Activated naive CD4-positive, alpha-beta T cell treated with anti-CD3 and anti-CD28 coated beads for 36 hours (primary cell): ENCODE measurements at regions of chr17 and their contacts with region 1.

Region 1: GRCh38 chr17:75904749-75905521 is at the start of gene MRPL38:
- DNase-seq: peak; percentile 95
- H3K4me3 Mint-ChIP-seq: peak within 1 kb of the TSS; percentile 83
- H3K27ac Mint-ChIP-seq: peak within 1 kb of the TSS; percentile 75
- H3K4me1 Mint-ChIP-seq: peaks cover 22% of the 10 kb centered on the region
- H3K27me3 Mint-ChIP-seq: no peaks in the 10 kb centered on the region
- total RNA-seq, gene MRPL38: 109 to 117 TPM

Region 2: DNA sequence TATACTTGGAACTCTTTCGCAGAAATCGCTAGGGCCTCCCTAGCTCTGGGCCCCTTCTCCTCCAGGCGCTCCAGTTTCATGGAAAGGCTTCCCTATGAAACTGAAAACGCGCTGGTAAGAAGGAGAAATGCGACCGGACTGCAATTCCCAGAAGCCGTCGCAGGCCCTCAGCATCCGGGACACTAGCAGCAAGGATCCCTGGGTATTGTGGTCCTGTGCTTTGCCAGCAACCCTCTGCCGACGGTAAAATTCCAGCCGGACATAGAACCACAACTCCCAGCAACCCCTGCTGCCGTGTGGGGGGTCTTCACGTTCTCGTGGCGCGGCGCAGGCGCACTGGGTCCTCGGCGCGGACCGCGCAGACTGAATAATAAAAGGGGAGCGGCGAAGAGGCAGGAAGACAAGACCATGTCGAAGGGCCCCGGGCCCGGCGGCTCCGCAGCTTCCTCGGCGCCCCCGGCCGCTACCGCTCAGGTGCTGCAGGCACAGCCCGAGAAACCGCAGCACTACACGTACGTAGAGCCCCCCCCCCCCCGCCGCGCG is 120.4 kb before region 1 on chr17 and contains the start of gene UNK:
- CTCF ChIA-PET with region 1: no interaction called
- intact Hi-C with region 1: loop called (anchors 1 kb)
- DNase-seq: peak; percentile 98
- H3K4me3 Mint-ChIP-seq: peak within 1 kb of the TSS; percentile 90
- H3K27ac Mint-ChIP-seq: peak within 1 kb of the TSS; percentile 100
- H3K4me1 Mint-ChIP-seq: peaks cover 51% of the 10 kb centered on the region
- H3K27me3 Mint-ChIP-seq: peaks cover 2% of the 10 kb centered on the region
- total RNA-seq, gene UNK: 19.1 to 21.4 TPM

Region 3: GRCh38 chr17:75940724-75941441 is 35.9 kb after region 1 on chr17 and contains the start of gene FBF1:
- CTCF ChIA-PET with region 1: interaction called, 5 read pairs
- intact Hi-C with region 1: loop called (anchors 1 kb)
- DNase-seq: peak; percentile 92
- H3K4me3 Mint-ChIP-seq: peak within 1 kb of the TSS; percentile 88
- H3K27ac Mint-ChIP-seq: peak within 1 kb of the TSS; percentile 76
- H3K4me1 Mint-ChIP-seq: peaks cover 11% of the 10 kb centered on the region
- H3K27me3 Mint-ChIP-seq: no peaks in the 10 kb centered on the region
- total RNA-seq, gene FBF1: 20.7 to 21.0 TPM

Region 4: GRCh38 chr17:76000016-76000754 is 95.2 kb after region 1 on chr17:
- CTCF ChIA-PET with region 1: interaction called, 85 read pairs
- intact Hi-C with region 1: loop called (anchors 1 kb)
- DNase-seq: peak; percentile 75
- H3K4me3 Mint-ChIP-seq: no peak overlapping the region
- H3K27ac Mint-ChIP-seq: no peak overlapping the region
- H3K4me1 Mint-ChIP-seq: peaks cover 16% of the 10 kb centered on the region
- H3K27me3 Mint-ChIP-seq: no peaks in the 10 kb centered on the region

Region 5: DNA sequence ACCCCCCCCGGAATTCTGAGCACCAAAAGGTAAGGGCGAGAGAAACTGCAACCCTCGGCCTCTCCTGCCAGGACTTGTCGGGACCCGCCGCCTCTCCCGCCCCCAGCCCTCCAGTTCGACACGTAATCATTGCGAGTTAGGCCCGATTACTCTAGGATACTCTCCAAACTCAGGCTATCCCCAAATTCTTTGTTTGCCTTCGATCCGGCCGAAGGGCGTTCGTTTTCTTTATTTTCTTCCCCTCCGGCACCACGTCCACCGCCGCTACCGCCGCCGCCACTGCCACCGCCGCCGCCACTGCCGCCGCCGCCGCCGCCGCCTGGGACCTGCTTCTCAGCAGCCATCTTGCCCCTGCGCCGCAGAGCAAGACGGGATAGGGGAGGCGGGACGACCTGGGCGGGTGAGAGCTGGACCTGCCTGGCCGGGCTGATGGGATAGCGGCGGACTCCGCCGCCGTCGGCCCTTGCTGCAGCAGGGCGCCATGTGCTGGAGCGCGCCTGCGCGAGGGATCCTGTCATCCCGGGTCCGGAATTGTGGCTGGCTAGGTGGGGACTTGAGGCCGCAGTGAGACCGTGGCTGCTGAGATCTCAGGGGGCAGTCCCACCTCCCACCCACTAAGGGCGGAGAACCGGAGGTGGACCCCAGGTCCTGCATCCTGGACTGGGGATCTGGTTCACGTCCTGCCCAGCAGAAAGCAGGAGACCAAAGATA is 167.4 kb after region 1 on chr17 and contains the start of gene SRP68:
- CTCF ChIA-PET with region 1: no interaction called
- intact Hi-C with region 1: loop called (anchors 1 kb)
- DNase-seq: peak; percentile 86
- H3K4me3 Mint-ChIP-seq: peak within 1 kb of the TSS; percentile 95
- H3K27ac Mint-ChIP-seq: peak within 1 kb of the TSS; percentile 98
- H3K4me1 Mint-ChIP-seq: peaks cover 49% of the 10 kb centered on the region
- H3K27me3 Mint-ChIP-seq: peaks cover 33% of the 10 kb centered on the region
- total RNA-seq, gene SRP68: 127 to 131 TPM

Region 6: DNA sequence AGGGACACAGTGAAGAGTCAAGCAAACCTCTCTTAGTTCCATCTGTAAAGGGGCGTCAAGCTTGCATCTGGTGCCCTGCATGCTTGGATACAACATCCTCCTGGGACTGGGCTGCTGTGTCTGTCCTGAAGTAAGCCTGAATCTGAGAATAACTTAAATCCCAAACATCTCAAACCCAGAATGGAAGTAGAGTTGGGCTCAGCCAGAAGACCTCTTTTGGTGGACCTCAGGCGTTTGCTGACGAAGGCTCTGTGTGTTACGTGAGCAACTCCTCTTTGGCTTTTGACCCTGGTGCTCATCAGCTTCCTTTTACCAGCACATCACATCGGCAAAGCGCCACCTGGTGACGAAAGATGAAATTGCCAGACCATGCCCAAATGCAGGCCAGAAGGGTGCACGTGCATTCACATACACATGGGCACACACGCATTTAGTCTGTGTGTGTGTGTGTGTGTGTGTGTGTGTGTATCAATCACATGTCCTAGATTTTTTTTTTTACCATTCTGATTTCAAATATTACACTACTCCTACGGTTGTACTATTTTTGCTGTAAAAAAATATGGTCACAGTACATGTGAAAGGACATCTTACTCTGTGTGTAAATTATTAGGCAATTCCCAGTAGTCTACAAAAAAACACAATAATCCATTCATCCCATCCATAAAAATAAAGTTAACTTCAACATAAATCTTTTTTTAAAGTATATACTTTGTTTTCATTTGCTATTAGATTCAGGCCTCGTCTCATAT is 277.3 kb after region 1 on chr17:
- CTCF ChIA-PET with region 1: no interaction called
- intact Hi-C with region 1: loop called (anchors 10 kb)
- DNase-seq: peak; percentile 99
- H3K4me3 Mint-ChIP-seq: peak overlapping the region; percentile 63
- H3K27ac Mint-ChIP-seq: peak overlapping the region; percentile 94
- H3K4me1 Mint-ChIP-seq: peaks cover 74% of the 10 kb centered on the region
- H3K27me3 Mint-ChIP-seq: no peaks in the 10 kb centered on the region

Region 7: GRCh38 chr17:76384222-76384986 is 479.5 kb after region 1 on chr17 and contains the start of gene SPHK1:
- CTCF ChIA-PET with region 1: no interaction called
- intact Hi-C with region 1: loop called (anchors 10 kb)
- DNase-seq: peak; percentile 68
- H3K4me3 Mint-ChIP-seq: peak within 1 kb of the TSS; percentile 83
- H3K27ac Mint-ChIP-seq: peak within 1 kb of the TSS; percentile 79
- H3K4me1 Mint-ChIP-seq: peaks cover 6% of the 10 kb centered on the region
- H3K27me3 Mint-ChIP-seq: no peaks in the 10 kb centered on the region
- total RNA-seq, gene SPHK1: 9.0 to 9.2 TPM